Activated B cell treated with CpG ODN at 0.5 μM for 24 hours (primary cell): ENCODE measurements at regions of chr16 and their contacts with region 1.

Region 1: GRCh38 chr16:81505011-81505661 is 60.5 kb downstream of the CMIP start:
- DNase-seq: no peak
- ATAC-seq: peak; percentile 7
- H3K4me3 Mint-ChIP-seq: peak overlapping the region; percentile 67
- H3K27ac Mint-ChIP-seq: peak overlapping the region; percentile 92
- H3K4me1 Mint-ChIP-seq: peaks cover 76% of the 10 kb centered on the region
- H3K27me3 Mint-ChIP-seq: no peaks in the 10 kb centered on the region
- CTCF ChIP-seq: no peak

Region 2: DNA sequence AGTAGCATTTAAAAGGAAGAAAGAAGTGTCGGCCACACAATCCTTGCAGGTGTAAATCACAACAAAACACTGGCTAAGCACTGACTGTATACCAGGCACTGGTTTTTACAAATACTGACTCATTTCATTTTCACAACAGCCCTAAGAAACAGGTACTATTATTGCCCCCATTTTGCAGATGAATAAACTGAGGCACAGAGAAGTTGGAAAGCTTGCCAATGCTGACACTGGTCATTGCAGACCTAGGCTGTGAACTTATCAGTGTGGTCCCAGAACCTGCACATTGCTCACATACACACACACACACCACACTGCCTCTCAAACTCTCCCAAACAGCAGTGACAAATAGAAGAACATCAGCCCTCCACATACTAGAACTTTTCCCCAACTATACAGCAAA is 738.3 kb before region 1 on chr16:
- CTCF ChIA-PET with region 1: no interaction called
- POLR2A ChIA-PET with region 1: no interaction called
- intact Hi-C with region 1: no loop called
- DNase-seq: no peak
- ATAC-seq: no peak
- H3K4me3 Mint-ChIP-seq: no peak overlapping the region
- H3K27ac Mint-ChIP-seq: no peak overlapping the region
- H3K4me1 Mint-ChIP-seq: no peaks in the 10 kb centered on the region
- H3K27me3 Mint-ChIP-seq: no peaks in the 10 kb centered on the region
- CTCF ChIP-seq: no peak

Region 3: DNA sequence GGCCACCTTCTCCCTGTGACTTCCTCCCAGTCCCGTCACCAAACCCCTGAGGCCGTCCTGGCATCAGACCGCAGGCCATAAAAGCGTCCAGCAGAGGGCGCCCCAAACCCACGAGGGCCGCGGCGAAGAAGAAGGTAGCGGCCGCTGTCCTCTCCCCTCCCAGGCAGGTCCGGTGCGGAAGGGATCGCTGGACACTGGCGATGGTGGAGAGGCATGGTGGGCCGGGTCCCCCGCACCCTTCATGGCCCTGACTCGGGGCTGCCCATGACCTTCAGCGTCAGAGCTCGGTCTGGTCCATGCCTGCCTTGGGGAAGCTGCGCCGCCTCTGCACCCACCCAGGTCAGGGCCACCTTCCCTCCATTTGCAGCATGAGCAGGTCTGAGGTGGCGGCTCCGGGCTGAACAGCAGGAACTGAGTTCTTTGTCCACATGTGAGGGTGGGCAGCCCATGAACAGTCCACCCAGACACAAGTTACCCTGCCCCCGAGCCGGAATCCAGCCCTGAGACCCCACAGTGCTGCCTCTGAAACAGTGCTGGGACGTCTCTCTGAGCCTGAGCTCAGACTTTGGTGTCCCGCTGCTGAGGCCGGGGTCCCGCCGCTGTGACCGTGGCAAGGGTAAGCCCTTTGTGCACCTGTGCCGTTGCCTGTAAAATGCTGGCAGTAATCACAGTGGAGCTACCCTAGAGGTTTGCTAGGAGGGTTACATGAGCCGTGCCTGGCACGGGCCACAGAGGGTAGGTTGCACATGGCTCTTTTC is 101.3 kb before region 1 on chr16:
- CTCF ChIA-PET with region 1: interaction called, 11 read pairs
- POLR2A ChIA-PET with region 1: interaction called, 16 read pairs
- intact Hi-C with region 1: loop called (anchors 1 kb)
- DNase-seq: peak; percentile 81
- ATAC-seq: peak; percentile 91
- H3K4me3 Mint-ChIP-seq: peak overlapping the region; percentile 19
- H3K27ac Mint-ChIP-seq: no peak overlapping the region
- H3K4me1 Mint-ChIP-seq: peaks cover 3% of the 10 kb centered on the region
- H3K27me3 Mint-ChIP-seq: peaks cover 7% of the 10 kb centered on the region
- CTCF ChIP-seq: peak; percentile 86

Region 4: DNA sequence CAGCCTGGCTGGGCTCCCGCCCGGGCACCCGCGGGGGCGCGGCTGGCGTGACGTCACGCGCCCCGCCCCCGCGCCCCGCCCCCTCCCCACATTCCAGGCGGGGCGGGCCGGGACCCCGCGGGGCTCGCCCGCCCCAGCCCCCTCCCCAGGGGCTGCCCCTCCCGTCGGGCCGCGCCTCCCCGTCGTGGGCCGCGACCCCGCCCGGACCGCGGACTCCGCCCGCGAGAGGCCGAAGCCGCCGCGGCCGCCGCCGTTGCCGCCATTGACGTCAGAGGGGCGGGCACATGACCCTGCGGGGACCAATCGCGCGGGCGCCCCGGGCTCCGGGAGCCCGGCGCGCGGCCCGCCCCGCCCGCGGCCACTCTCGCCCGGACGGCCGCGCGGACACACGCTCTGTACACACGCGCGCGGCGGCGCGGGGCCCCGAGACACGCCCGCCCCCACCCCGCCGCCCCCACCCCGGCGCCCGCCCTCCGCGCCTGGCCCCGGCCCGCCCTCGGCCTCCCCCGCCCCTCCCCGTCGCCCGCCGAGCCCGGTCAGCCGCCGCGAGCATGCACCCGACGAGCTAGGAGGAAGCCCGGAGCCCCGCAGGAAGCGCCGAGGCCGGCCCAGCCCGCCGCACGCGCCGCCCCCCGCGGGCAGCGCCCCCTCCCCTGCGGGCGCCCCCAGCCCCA is 60.6 kb before region 1 on chr16 and contains the start of gene CMIP:
- CTCF ChIA-PET with region 1: interaction called, 4 read pairs
- POLR2A ChIA-PET with region 1: interaction called, 32 read pairs
- intact Hi-C with region 1: loop called (anchors 1 kb)
- DNase-seq: peak; percentile 88
- ATAC-seq: peak; percentile 82
- H3K4me3 Mint-ChIP-seq: peak within 1 kb of the TSS; percentile 87
- H3K27ac Mint-ChIP-seq: peak within 1 kb of the TSS; percentile 79
- H3K4me1 Mint-ChIP-seq: peaks cover 43% of the 10 kb centered on the region
- H3K27me3 Mint-ChIP-seq: no peaks in the 10 kb centered on the region
- CTCF ChIP-seq: no peak
- total RNA-seq, gene CMIP: 62.4 and 76.3 TPM in 2 replicates

Region 5: GRCh38 chr16:81481207-81481821 is 23.8 kb before region 1 on chr16:
- CTCF ChIA-PET with region 1: interaction called, 14 read pairs
- POLR2A ChIA-PET with region 1: interaction called, 307 read pairs
- intact Hi-C with region 1: loop called (anchors 1 kb)
- DNase-seq: peak; percentile 58
- ATAC-seq: peak; percentile 84
- H3K4me3 Mint-ChIP-seq: peak overlapping the region; percentile 79
- H3K27ac Mint-ChIP-seq: peak overlapping the region; percentile 93
- H3K4me1 Mint-ChIP-seq: peaks cover 90% of the 10 kb centered on the region
- H3K27me3 Mint-ChIP-seq: no peaks in the 10 kb centered on the region
- CTCF ChIP-seq: no peak

Region 6: GRCh38 chr16:81521151-81521626 is 16.1 kb after region 1 on chr16:
- CTCF ChIA-PET with region 1: interaction called, 6 read pairs
- POLR2A ChIA-PET with region 1: interaction called, 15 read pairs
- intact Hi-C with region 1: loop called (anchors 1 kb)
- DNase-seq: no peak
- ATAC-seq: peak; percentile 80
- H3K4me3 Mint-ChIP-seq: no peak overlapping the region
- H3K27ac Mint-ChIP-seq: peak overlapping the region; percentile 66
- H3K4me1 Mint-ChIP-seq: peaks cover 29% of the 10 kb centered on the region
- H3K27me3 Mint-ChIP-seq: no peaks in the 10 kb centered on the region
- CTCF ChIP-seq: no peak

Region 7: DNA sequence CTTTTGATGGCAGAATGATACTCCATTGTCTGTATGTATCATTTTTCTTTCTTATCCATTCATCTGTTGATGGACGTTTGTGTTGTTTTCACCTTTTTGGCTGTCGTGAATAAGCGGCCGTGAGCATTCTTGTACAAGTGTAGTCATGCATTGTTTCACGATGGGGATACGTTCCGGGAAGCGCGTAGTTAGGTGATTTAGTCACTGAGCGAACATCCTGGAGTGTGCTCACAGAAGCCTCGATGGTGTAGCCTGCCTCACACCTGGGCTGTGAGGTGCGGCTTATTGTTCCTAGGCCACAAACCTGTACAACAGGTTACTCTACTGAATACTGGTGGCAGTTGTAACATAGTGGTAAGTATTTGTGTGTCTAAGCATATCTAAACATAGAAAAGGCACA is 76.0 kb after region 1 on chr16:
- CTCF ChIA-PET with region 1: no interaction called
- POLR2A ChIA-PET with region 1: no interaction called
- intact Hi-C with region 1: no loop called
- DNase-seq: no peak
- ATAC-seq: no peak
- H3K4me3 Mint-ChIP-seq: no peak overlapping the region
- H3K27ac Mint-ChIP-seq: no peak overlapping the region
- H3K4me1 Mint-ChIP-seq: peaks cover 5% of the 10 kb centered on the region
- H3K27me3 Mint-ChIP-seq: no peaks in the 10 kb centered on the region
- CTCF ChIP-seq: no peak

Region 8: DNA sequence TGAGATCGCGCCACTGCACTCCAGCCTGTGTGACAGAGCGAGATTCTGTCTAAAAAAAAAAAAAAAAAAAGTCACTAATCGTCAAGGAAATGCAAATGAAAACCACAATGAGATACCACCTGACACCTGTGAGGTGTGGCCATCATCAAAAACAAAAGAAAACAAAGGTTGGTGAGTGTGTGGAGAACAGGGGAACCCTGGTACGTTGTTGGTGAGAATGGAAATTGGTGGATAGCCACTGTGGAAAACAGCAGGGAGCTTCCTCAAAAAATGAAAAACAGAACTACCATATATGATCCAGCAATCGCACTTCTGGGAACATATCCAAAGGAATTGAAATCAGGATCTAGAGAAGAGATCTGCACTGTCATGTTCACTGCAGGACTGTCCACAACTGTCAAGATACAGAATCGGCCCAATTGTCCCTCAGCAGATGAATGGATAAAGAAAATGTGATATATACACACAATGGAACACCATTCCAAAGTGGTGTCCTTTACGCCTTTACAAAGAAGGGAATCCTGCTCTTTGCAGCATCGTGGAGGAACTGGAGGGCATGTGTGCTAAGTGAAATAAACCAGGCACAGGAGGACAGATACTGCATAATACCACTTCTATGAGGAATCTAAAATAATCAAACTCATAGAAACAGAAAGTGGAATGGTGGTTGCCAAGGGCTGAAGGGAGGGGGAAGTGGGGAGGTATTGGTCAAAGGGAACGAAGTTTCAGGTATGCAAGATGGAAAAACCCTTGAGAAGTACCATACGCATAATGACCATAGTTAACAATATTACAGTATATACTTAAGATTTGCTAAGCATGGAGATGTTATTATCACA is 210.4 kb after region 1 on chr16:
- CTCF ChIA-PET with region 1: no interaction called
- POLR2A ChIA-PET with region 1: no interaction called
- intact Hi-C with region 1: loop called (anchors 1 kb)
- DNase-seq: no peak
- ATAC-seq: peak; percentile 67
- H3K4me3 Mint-ChIP-seq: peak overlapping the region; percentile 75
- H3K27ac Mint-ChIP-seq: peak overlapping the region; percentile 89
- H3K4me1 Mint-ChIP-seq: peaks cover 49% of the 10 kb centered on the region
- H3K27me3 Mint-ChIP-seq: no peaks in the 10 kb centered on the region
- CTCF ChIP-seq: no peak

Region 9: GRCh38 chr16:81885976-81886586 is 380.9 kb after region 1 on chr16:
- CTCF ChIA-PET with region 1: no interaction called
- POLR2A ChIA-PET with region 1: no interaction called
- intact Hi-C with region 1: loop called (anchors 10 kb)
- DNase-seq: no peak
- ATAC-seq: peak; percentile 81
- H3K4me3 Mint-ChIP-seq: no peak overlapping the region
- H3K27ac Mint-ChIP-seq: no peak overlapping the region
- H3K4me1 Mint-ChIP-seq: no peaks in the 10 kb centered on the region
- H3K27me3 Mint-ChIP-seq: no peaks in the 10 kb centered on the region
- CTCF ChIP-seq: peak; percentile 46